Activated CD4-positive, alpha-beta memory T cell treated with anti-CD3 and anti-CD28 coated beads for 36 hours (primary cell): ENCODE measurements at regions of chr12 and their contacts with region 1.

Region 1: DNA sequence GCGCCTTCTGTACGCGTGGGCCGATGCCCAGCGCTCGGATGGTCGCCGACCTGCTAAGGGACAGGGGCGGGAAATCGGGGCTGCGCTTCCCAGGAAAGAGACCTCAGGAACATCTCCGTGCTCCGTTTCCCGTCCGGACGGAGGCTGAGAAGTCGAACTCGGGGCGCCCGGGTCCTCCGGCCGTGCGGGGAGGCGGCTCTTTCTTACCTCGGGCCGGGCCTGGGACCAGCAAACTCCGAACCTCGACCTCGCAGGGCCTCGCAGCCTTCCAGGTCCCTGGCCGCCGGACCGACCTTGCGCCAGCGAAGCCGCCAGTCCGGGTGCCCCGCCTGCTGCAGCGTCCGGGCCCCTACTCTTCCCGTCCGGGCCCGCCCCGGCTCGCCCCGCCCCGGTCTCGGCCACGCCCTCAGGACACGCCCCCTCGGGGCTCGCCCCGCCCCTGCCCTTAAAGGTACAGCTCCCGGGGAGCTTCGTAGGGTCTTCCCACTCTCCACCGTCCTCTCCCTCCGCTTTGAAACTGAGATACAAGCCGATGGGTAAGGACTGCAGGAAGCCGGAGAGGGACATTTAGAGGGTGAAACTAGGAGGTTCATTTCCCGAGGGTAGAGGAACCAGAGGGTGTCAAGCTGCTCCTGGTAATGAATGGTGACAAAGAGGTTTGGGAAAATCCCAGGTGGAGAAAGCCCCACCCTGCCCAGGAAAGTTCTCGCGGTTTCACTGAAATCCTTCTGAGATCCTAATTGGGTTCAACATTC is at the start of gene SLC8B1:
- DNase-seq: peak; percentile 93
- H3K4me3 Mint-ChIP-seq: peak within 1 kb of the TSS; percentile 97
- H3K27ac Mint-ChIP-seq: peak within 1 kb of the TSS; percentile 75
- H3K4me1 Mint-ChIP-seq: peaks cover 26% of the 10 kb centered on the region
- H3K27me3 Mint-ChIP-seq: no peaks in the 10 kb centered on the region
- total RNA-seq, gene SLC8B1: 21.5 to 22.0 TPM

Region 2: GRCh38 chr12:112936927-112937326 is 398.0 kb before region 1 on chr12:
- CTCF ChIA-PET with region 1: no interaction called
- POLR2A ChIA-PET with region 1: no interaction called
- intact Hi-C with region 1: no loop called
- DNase-seq: no peak
- H3K4me3 Mint-ChIP-seq: no peak overlapping the region
- H3K27ac Mint-ChIP-seq: peak overlapping the region; percentile 2
- H3K4me1 Mint-ChIP-seq: peaks cover 35% of the 10 kb centered on the region
- H3K27me3 Mint-ChIP-seq: no peaks in the 10 kb centered on the region

Region 3: DNA sequence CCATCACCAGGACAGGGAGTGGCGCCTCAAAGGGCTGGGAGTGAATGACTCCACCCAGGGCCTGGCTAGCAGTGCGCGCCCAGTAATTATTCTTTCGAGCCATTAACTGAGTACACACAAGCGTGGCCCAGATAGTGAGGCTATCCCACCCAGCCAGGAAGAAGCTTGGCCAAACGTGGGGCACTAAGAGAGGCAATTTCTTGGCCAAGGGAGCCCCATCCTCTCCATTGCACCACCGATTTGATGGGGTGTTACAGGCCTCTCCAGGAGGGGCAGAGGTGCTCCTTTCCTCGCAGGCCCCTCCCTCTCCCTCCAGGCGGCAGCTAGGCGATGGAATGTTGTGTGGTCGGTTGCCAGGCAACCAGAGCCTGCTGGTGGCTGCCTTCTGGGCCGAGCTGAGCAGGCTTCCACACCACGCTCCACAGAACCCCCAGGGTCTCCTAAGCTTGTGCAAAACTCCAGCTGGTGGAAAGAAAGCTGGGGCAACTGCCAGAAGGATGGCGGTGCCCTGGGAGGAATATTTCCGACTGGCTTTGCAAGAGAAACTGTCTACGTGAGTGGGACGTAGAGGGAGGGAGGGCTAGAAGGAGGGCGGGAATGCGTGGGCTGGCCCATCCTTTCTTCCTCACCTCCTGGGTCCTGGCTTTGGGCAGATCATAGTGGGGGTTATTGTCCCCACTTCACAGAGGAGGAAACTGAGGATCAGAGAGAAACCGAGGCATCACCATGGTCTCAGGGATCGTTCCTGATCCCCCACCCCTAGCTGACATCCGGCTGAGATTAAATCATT is 185.4 kb before region 1 on chr12 and contains the start of gene CFAP73:
- CTCF ChIA-PET with region 1: no interaction called
- POLR2A ChIA-PET with region 1: no interaction called
- intact Hi-C with region 1: no loop called
- DNase-seq: peak; percentile 31
- H3K4me3 Mint-ChIP-seq: no peak within 1 kb of the TSS
- H3K27ac Mint-ChIP-seq: no peak within 1 kb of the TSS
- H3K4me1 Mint-ChIP-seq: peaks cover 14% of the 10 kb centered on the region
- H3K27me3 Mint-ChIP-seq: peaks cover 8% of the 10 kb centered on the region
- total RNA-seq, gene CFAP73: 0.90 to 0.94 TPM

Region 4: DNA sequence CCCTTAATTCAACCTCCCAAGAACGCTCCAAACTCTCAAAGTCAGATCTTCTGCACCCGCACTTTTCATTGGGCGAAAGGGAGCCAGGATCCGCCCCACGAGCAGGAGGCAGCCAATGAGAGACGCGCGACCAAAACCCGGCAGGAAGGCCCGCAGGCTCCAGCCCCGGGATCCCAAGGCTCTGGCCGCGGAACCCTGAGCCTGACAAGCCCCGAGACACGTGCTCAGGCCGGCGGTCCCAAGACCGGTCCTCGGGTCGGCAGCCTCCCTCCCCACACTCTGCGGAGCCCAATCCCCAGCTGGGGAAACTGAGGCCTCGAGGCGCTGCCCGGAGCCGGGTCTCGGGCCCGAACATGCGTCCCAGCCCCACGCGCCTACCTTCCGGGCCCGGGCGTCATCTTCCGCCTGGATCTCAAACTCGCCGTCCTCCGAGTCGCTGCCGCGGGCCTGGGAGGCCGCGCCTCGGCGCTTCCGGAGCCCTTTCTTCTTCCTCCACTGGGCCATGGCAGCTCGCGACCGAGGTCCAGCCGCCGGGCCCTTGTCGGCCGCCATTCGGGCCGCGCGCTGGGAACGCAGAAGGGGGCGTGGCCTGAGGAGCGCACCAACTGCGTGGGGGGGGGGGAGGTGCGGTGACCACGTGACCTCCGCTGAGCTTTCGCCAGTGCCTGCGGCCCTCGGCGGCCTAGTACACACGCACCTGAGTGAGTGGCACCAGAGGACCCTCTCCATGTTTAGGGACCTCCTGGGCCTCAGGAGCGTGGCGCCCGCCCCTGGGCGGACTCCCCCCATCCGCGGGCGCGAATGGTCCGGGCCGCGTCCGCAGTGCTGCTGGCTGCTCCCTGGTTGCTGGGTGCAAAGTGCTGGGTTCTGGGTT is 149.8 kb before region 1 on chr12 and contains the starts of genes DDX54 and RITA1:
- CTCF ChIA-PET with region 1: interaction called, 5 read pairs
- POLR2A ChIA-PET with region 1: interaction called, 3 read pairs
- intact Hi-C with region 1: loop called (anchors 10 kb)
- DNase-seq: peak; percentile 93
- H3K4me3 Mint-ChIP-seq: peak within 1 kb of the TSS; percentile 94
- H3K27ac Mint-ChIP-seq: peak within 1 kb of the TSS; percentile 93
- H3K4me1 Mint-ChIP-seq: peaks cover 24% of the 10 kb centered on the region
- H3K27me3 Mint-ChIP-seq: no peaks in the 10 kb centered on the region
- total RNA-seq, gene DDX54: 107 to 109 TPM
- total RNA-seq, gene RITA1: 18.7 to 22.0 TPM

Region 5: DNA sequence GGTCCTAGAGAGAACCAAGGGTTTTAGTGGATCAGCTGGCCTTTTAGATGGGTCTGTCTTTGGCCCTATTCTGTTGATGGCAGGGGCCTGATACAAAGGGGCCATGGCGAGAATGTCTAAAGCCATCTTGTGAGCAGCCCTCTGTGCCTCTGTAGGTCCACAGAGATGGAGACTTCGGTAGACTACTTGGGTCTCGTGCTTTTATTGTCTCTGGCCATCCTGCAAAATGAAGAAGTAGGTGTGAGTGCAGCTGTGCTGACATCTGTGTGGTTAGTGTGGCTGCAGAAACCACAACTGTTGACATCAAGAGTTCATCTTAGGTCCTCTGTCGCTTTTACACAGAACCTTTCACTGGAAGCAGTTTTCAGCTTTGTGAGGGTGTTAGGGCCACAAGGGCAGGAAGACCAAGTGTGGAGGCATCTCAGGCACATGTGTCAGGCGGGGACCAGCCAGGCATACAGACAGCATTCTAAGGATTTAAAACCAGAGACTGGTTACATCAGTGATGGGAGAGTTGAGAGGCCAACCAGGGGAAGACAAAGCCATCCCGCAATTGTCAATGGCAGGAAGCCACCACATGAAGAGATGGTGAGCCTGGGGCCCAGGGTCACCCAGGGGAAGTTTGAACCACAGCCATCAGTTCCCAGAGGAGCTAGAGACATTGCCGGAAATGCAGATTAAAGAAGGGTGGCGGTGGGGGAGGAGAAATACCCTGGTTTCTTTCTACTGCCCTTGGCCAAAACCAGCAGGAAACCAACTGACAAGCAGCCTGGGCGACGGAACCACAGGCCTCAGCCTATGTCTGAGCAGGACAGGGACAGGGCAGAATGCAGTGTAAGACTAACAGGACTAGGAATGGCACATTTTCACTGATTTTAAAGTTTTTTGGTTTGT is 126.7 kb before region 1 on chr12:
- CTCF ChIA-PET with region 1: no interaction called
- POLR2A ChIA-PET with region 1: no interaction called
- intact Hi-C with region 1: no loop called
- DNase-seq: peak; percentile 86
- H3K4me3 Mint-ChIP-seq: peak overlapping the region; percentile 38
- H3K27ac Mint-ChIP-seq: peak overlapping the region; percentile 91
- H3K4me1 Mint-ChIP-seq: peaks cover 50% of the 10 kb centered on the region
- H3K27me3 Mint-ChIP-seq: no peaks in the 10 kb centered on the region